ENCODE measurements at regions of chr2 and their contacts with region 1.

Region 1: DNA sequence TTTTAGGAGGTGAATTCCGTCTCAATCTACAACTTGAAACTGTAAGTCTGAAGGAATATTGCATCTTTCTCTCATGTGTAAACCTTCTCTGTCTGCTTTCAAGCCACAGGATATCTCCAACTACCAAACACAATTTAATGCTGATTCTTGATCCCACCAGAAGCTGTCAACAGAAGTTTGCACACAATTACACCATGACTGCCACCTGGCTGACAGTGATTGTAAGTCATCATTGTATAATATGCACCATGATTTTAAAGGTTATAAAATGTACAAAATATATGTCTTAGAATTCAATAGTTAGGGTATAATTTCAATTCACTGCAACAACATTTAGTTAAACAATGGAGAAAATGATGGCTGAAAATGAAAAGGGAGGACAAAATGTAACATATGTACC is 18.4 kb downstream of the PREPL start:
- DNase-seq: no peak
- H3K4me3 ChIP-seq: no peak overlapping the region
- H3K4me3 Mint-ChIP-seq: no peak overlapping the region
- H3K27ac ChIP-seq: no peak overlapping the region
- H3K27ac Mint-ChIP-seq: no peak overlapping the region
- H3K4me1 ChIP-seq: no peaks in the 10 kb centered on the region
- H3K4me1 Mint-ChIP-seq: no peaks in the 10 kb centered on the region
- H3K27me3 ChIP-seq: no peaks in the 10 kb centered on the region
- H3K27me3 Mint-ChIP-seq: no peaks in the 10 kb centered on the region
- CTCF ChIP-seq: peak; percentile 12

Region 2: DNA sequence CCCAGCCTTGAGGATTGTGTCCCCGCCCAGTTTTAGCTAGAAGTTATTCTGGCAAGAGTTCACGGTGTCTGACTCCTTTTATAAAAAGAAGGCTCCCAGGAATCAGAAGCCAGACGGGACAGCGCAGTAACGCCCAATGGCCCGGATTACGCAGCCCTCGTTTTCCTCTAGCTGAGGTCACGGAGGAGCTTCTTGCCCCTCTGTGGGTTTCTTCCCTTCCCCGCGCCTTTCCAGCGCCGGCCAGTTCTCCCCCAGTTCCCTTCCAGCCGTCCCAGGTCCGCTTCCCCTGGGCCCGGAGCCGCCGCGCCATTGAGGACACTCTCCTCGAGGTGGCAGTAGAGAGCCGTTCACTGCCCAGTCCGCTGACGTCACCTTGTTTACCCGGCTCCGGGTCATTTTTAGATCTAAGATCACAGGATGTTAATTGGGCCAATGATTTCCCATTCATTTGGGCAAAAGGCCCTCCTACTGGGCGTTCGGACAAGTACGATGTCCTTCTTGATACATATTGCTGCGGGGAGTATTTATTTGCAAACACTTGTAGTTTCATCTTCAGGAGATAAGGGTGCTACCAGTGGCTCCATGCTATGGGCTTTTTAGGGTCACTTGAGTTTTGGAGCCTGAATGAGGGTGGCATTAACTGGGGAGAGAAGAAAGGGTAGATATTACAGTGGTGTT is 255.7 kb before region 1 on chr2:
- intact Hi-C with region 1: loop called in 1 of 2 experiments (anchors 10 kb)
- DNase-seq: peak; percentile 79 to 84 (median 83)
- H3K4me3 ChIP-seq: peak overlapping the region; percentile 22 to 75 (median 32)
- H3K4me3 Mint-ChIP-seq: peak overlapping the region; percentile 64 to 81
- H3K27ac ChIP-seq: peak overlapping the region in 1 of 2 donors; percentile 63
- H3K27ac Mint-ChIP-seq: peak overlapping the region; percentile 54 to 90 (median 77)
- H3K4me1 ChIP-seq: peaks cover 8 to 9% of the 10 kb centered on the region in 2 donors
- H3K4me1 Mint-ChIP-seq: peaks cover 27% of the 10 kb centered on the region
- H3K27me3 ChIP-seq: no peaks in the 10 kb centered on the region
- H3K27me3 Mint-ChIP-seq: peaks cover 0 to 5% (median 2%) of the 10 kb centered on the region in 3 donors
- CTCF ChIP-seq: peak; percentile 93

Region 3: GRCh38 chr2:44602446-44602845 is 259.6 kb after region 1 on chr2:
- intact Hi-C with region 1: no loop called
- DNase-seq: peak; percentile 25 to 74 (median 26)
- H3K4me3 ChIP-seq: no peak overlapping the region
- H3K4me3 Mint-ChIP-seq: no peak overlapping the region
- H3K27ac ChIP-seq: no peak overlapping the region
- H3K27ac Mint-ChIP-seq: peak overlapping the region in 1 of 7 donors; percentile 5
- H3K4me1 ChIP-seq: peaks cover 0 to 4% of the 10 kb centered on the region in 2 donors
- H3K4me1 Mint-ChIP-seq: peaks cover 6% of the 10 kb centered on the region
- H3K27me3 ChIP-seq: no peaks in the 10 kb centered on the region
- H3K27me3 Mint-ChIP-seq: no peaks in the 10 kb centered on the region
- CTCF ChIP-seq: no peak